ENCODE measurements at regions of chr17 and their contacts with region 1.

Region 1: GRCh38 chr17:12110906-12111305 is 90.2 kb downstream of the MAP2K4 start:
- DNase-seq: no peak
- ATAC-seq: no peak
- H3K4me3 ChIP-seq: no peak overlapping the region
- H3K27ac ChIP-seq: no peak overlapping the region
- H3K4me1 ChIP-seq: no peaks in the 10 kb centered on the region
- H3K27me3 ChIP-seq: no peaks in the 10 kb centered on the region
- CTCF ChIP-seq: no peak
- EP300 ChIP-seq: no peak
- POLR2A ChIP-seq: no peak
- RAD21 ChIP-seq: no peak

Region 2: DNA sequence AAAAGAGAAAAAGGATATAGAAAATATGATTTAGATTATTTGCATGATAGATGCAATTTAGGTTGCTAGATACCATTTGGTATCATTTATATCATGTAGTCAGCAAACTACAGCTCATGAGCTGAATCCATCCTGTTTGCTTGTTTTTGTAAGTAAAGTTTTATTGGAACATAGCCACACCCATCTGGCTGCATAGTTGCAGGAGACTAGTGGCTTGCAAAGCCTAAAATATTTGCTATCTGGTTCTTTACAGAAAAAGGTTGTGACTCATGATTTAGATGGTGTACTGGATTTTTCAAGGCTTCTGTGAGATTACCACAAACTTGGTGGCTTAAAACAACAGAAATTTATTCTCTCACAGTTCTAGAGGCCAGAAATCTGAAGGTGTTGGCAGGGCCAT is 40.3 kb before region 1 on chr17:
- CTCF ChIA-PET with region 1: no interaction called
- POLR2A ChIA-PET with region 1: no interaction called
- in situ Hi-C with region 1: no loop called
- intact Hi-C with region 1: loop called (anchors 1 kb)
- DNase-seq: no peak
- ATAC-seq: no peak
- H3K4me3 ChIP-seq: no peak overlapping the region
- H3K27ac ChIP-seq: no peak overlapping the region
- H3K4me1 ChIP-seq: no peaks in the 10 kb centered on the region
- H3K27me3 ChIP-seq: no peaks in the 10 kb centered on the region
- CTCF ChIP-seq: no peak
- EP300 ChIP-seq: no peak
- POLR2A ChIP-seq: no peak
- RAD21 ChIP-seq: no peak

Region 3: GRCh38 chr17:12122075-12122474 is 11.2 kb after region 1 on chr17:
- CTCF ChIA-PET with region 1: no interaction called
- POLR2A ChIA-PET with region 1: no interaction called
- in situ Hi-C with region 1: no loop called
- intact Hi-C with region 1: no loop called
- DNase-seq: no peak
- ATAC-seq: no peak
- H3K4me3 ChIP-seq: no peak overlapping the region
- H3K27ac ChIP-seq: no peak overlapping the region
- H3K4me1 ChIP-seq: no peaks in the 10 kb centered on the region
- H3K27me3 ChIP-seq: no peaks in the 10 kb centered on the region
- CTCF ChIP-seq: no peak
- EP300 ChIP-seq: no peak
- POLR2A ChIP-seq: no peak
- RAD21 ChIP-seq: no peak

Measured in HepG2 (cell line).